ENCODE measurements at regions of chr17 and their contacts with region 1.

Region 1: GRCh38 chr17:5592382-5592781 is 8.1 kb upstream of the NLRP1 start:
- DNase-seq: peak; percentile 49 to 53
- ATAC-seq: peak; percentile 45 to 70; a peak in 3 of 6 replicates
- H3K4me3 ChIP-seq: no peak overlapping the region
- H3K27ac ChIP-seq: no peak overlapping the region
- H3K4me1 ChIP-seq: no peaks in the 10 kb centered on the region
- CTCF ChIP-seq: peak; percentile 87
- EP300 ChIP-seq: no peak
- POLR2A ChIP-seq: no peak
- RAD21 ChIP-seq: peak; percentile 80 to 86

Region 2: GRCh38 chr17:5605452-5605851 is 13.1 kb after region 1 on chr17:
- CTCF ChIA-PET with region 1: interaction called, 29 read pairs
- POLR2A ChIA-PET with region 1: no interaction called
- DNase-seq: no peak
- ATAC-seq: no peak
- H3K4me3 ChIP-seq: no peak overlapping the region
- H3K27ac ChIP-seq: no peak overlapping the region
- H3K4me1 ChIP-seq: no peaks in the 10 kb centered on the region
- CTCF ChIP-seq: no peak
- EP300 ChIP-seq: no peak
- POLR2A ChIP-seq: no peak
- RAD21 ChIP-seq: no peak

Region 3: GRCh38 chr17:5706577-5707216 is 114.3 kb after region 1 on chr17:
- CTCF ChIA-PET with region 1: interaction called, 14 read pairs
- POLR2A ChIA-PET with region 1: no interaction called
- DNase-seq: peak; percentile 67 to 69
- ATAC-seq: peak; percentile 69 to 90; a peak in 5 of 6 replicates
- H3K4me3 ChIP-seq: no peak overlapping the region
- H3K27ac ChIP-seq: no peak overlapping the region
- H3K4me1 ChIP-seq: no peaks in the 10 kb centered on the region
- CTCF ChIP-seq: peak; percentile 53
- EP300 ChIP-seq: no peak
- POLR2A ChIP-seq: no peak
- RAD21 ChIP-seq: peak; percentile 53 to 72

Region 4: GRCh38 chr17:6163612-6164333 is 571.4 kb after region 1 on chr17:
- CTCF ChIA-PET with region 1: no interaction called
- POLR2A ChIA-PET with region 1: no interaction called
- DNase-seq: no peak
- ATAC-seq: no peak
- H3K4me3 ChIP-seq: no peak overlapping the region
- H3K27ac ChIP-seq: no peak overlapping the region
- H3K4me1 ChIP-seq: no peaks in the 10 kb centered on the region
- CTCF ChIP-seq: no peak
- EP300 ChIP-seq: no peak
- POLR2A ChIP-seq: no peak
- RAD21 ChIP-seq: no peak

Region 5: DNA sequence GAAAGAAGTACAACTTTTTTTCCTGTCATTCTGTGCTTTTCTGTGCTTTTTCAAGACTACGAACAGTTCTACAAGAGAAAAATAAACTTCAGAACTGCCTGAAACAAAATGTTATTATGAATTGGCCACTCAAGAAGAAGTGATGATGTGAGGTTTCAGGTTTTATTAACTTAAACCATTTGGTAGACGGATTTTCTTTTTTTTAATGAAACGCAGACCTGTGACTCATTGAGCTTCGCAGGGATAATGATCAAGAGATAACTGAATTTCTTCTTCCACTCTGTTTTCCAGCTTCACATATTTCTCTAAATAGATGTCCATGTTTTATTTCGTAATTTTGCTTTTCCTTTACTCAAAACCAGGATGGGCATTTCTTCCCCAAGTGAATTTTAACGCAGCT is 809.9 kb after region 1 on chr17:
- CTCF ChIA-PET with region 1: interaction called, 11 read pairs
- POLR2A ChIA-PET with region 1: no interaction called
- DNase-seq: no peak
- ATAC-seq: no peak
- H3K4me3 ChIP-seq: no peak overlapping the region
- H3K27ac ChIP-seq: no peak overlapping the region
- H3K4me1 ChIP-seq: no peaks in the 10 kb centered on the region
- CTCF ChIP-seq: no peak
- EP300 ChIP-seq: no peak
- POLR2A ChIP-seq: no peak
- RAD21 ChIP-seq: no peak

Region 6: DNA sequence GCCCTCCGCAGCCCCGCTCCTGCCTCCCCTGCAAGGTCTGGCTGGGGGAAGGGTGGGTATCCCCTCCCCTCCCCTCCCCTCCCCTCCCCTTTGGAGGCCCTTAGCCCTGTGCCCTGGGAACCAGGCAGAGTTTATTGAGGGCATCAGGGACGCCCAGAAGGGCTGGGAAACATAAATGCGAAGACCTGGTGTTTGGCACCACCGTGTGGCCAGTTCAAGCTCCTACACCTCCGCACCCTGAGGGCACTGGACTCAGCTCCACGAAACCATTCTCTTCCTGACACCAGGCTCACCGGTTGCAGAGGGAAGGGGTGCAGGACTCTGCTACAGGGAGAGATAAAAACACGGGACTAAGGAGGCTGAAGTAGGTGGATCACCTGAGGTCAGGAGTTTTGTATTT is 843.6 kb after region 1 on chr17:
- CTCF ChIA-PET with region 1: interaction called, 45 read pairs
- POLR2A ChIA-PET with region 1: no interaction called
- DNase-seq: peak; percentile 79 to 90
- ATAC-seq: peak; percentile 93 to 98
- H3K4me3 ChIP-seq: no peak overlapping the region
- H3K27ac ChIP-seq: no peak overlapping the region
- H3K4me1 ChIP-seq: no peaks in the 10 kb centered on the region
- CTCF ChIP-seq: peak; percentile 84
- EP300 ChIP-seq: no peak
- POLR2A ChIP-seq: no peak
- RAD21 ChIP-seq: peak; percentile 87 to 88

Measured in A549 (cell line).